ENCODE measurements at regions of chr17 and their contacts with region 1.

Region 1: GRCh38 chr17:59558977-59559376 is 6.4 kb upstream of the DHX40 start:
- DNase-seq: no peak
- ATAC-seq: no peak
- H3K4me3 ChIP-seq: no peak overlapping the region
- H3K27ac ChIP-seq: no peak overlapping the region
- H3K4me1 ChIP-seq: no peaks in the 10 kb centered on the region
- H3K27me3 ChIP-seq: no peaks in the 10 kb centered on the region
- CTCF ChIP-seq: peak in 7 of 12 donors; percentile 5 to 39 (median 33)
- POLR2A ChIP-seq: no peak

Region 2: GRCh38 chr17:59155439-59156182 is 403.4 kb before region 1 on chr17 and contains the start of gene PRR11:
- intact Hi-C with region 1: no loop called
- DNase-seq: peak; percentile 92 to 97 (median 95)
- ATAC-seq: peak; percentile 94 to 97 (median 96)
- H3K4me3 ChIP-seq: peak within 1 kb of the TSS; percentile 52 to 91 (median 74)
- H3K27ac ChIP-seq: peak within 1 kb of the TSS; percentile 35 to 89 (median 84)
- H3K4me1 ChIP-seq: peaks cover 0 to 37% (median 15%) of the 10 kb centered on the region in 12 donors
- H3K27me3 ChIP-seq: no peaks in the 10 kb centered on the region
- CTCF ChIP-seq: no peak
- POLR2A ChIP-seq: peak in 1 of 2 donors; percentile 7
- total RNA-seq, gene PRR11: 0.51 to 11.4 (median 1.1) TPM

Region 3: DNA sequence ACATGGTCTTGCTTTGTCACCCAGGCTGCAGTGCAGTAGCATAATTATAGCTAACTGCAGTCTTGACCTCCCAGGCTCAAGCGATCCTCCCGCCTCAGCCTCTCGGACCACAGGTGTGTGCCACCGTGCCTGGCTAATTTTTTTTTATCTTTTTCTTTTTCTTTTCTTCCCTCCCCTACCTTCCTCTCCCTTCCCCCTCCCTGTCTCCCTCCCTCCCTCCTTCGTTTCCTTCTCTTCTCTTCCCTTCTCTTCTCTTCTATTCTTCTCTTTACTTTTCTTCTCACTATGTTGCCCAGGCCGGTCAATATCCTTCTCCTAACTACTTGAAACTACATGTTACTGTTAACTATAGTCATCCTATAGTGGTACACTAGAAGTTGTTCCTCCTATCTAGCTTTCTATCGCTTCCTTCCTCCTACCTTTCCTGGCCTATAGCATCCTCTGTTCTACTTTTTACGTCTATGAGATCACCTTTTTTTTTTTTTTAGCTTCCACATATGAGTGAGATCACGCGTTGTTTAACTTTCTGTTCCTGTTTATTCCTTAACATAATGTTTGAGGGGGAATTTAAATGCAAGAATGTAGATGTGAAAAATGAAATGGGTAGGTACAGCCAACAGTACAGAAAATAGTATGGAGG is 258.2 kb before region 1 on chr17:
- intact Hi-C with region 1: loop called in 1 of 10 experiments (anchors 10 kb)
- DNase-seq: no peak
- ATAC-seq: no peak
- H3K4me3 ChIP-seq: no peak overlapping the region
- H3K27ac ChIP-seq: no peak overlapping the region
- H3K4me1 ChIP-seq: no peaks in the 10 kb centered on the region
- H3K27me3 ChIP-seq: no peaks in the 10 kb centered on the region
- CTCF ChIP-seq: no peak
- POLR2A ChIP-seq: no peak